Mammary epithelial cell (primary cell): ENCODE measurements at regions of chr18 and their contacts with region 1.

Region 1: DNA sequence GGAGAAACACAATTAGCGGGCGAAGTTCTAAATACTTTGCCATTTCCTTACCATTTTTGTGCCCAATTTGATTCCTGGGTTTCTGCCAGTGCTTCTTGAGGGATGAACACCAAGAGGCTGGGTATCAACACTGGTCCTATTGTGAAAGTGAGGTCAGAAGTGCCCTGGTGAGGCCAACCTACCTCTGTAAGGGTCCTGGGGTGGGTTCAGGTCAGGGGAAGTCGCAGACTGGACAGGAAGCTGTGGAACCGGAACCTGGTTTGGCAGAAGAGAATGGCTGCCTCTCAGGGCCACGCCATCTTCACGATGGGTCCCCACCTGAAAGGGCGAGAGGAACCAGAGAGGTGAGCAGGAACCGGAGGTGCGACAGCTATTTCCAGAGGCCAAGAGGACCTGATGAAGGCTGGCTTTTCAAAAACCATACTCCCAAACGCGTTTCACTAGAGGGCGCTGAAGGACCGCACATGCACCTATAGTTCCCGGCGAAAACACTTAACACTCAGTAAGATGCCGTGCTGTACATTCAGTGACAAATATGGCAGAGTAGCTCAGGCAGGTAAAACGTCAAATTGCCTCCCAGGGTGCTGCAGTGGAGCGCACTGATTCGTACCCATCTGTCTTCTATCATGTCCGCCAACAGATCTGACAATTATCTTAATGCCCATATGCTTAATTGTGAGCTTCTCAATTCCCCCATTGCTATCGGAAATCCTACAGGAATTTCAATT is 275.3 kb upstream of the CCDC68 start:
- DNase-seq: peak; percentile 70
- H3K4me3 ChIP-seq: no peak overlapping the region
- H3K27ac ChIP-seq: no peak overlapping the region
- H3K4me1 ChIP-seq: no peaks in the 10 kb centered on the region
- H3K27me3 ChIP-seq: no peaks in the 10 kb centered on the region
- CTCF ChIP-seq: peak; percentile 73 to 91

Region 2: GRCh38 chr18:54906331-54907185 is 328.0 kb before region 1 on chr18:
- CTCF ChIA-PET with region 1: no interaction called
- dilution Hi-C with region 1: no loop called
- in situ Hi-C with region 1: no loop called
- intact Hi-C with region 1: no loop called
- DNase-seq: no peak
- H3K4me3 ChIP-seq: no peak overlapping the region
- H3K27ac ChIP-seq: no peak overlapping the region
- H3K4me1 ChIP-seq: no peaks in the 10 kb centered on the region
- H3K27me3 ChIP-seq: no peaks in the 10 kb centered on the region
- CTCF ChIP-seq: no peak

Region 3: GRCh38 chr18:55199291-55199963 is 35.1 kb before region 1 on chr18:
- CTCF ChIA-PET with region 1: no interaction called
- dilution Hi-C with region 1: no loop called
- in situ Hi-C with region 1: no loop called
- intact Hi-C with region 1: no loop called
- DNase-seq: no peak
- H3K4me3 ChIP-seq: no peak overlapping the region
- H3K27ac ChIP-seq: no peak overlapping the region
- H3K4me1 ChIP-seq: no peaks in the 10 kb centered on the region
- H3K27me3 ChIP-seq: peaks cover 4% of the 10 kb centered on the region
- CTCF ChIP-seq: no peak

Region 4: GRCh38 chr18:55275039-55275901 is 40.7 kb after region 1 on chr18:
- CTCF ChIA-PET with region 1: interaction called, 3 read pairs
- dilution Hi-C with region 1: no loop called
- in situ Hi-C with region 1: no loop called
- intact Hi-C with region 1: loop called (anchors 1 kb)
- DNase-seq: peak; percentile 31
- H3K4me3 ChIP-seq: no peak overlapping the region
- H3K27ac ChIP-seq: no peak overlapping the region
- H3K4me1 ChIP-seq: peaks cover 13% of the 10 kb centered on the region
- H3K27me3 ChIP-seq: no peaks in the 10 kb centered on the region
- CTCF ChIP-seq: peak; percentile 11 to 25

Region 5: DNA sequence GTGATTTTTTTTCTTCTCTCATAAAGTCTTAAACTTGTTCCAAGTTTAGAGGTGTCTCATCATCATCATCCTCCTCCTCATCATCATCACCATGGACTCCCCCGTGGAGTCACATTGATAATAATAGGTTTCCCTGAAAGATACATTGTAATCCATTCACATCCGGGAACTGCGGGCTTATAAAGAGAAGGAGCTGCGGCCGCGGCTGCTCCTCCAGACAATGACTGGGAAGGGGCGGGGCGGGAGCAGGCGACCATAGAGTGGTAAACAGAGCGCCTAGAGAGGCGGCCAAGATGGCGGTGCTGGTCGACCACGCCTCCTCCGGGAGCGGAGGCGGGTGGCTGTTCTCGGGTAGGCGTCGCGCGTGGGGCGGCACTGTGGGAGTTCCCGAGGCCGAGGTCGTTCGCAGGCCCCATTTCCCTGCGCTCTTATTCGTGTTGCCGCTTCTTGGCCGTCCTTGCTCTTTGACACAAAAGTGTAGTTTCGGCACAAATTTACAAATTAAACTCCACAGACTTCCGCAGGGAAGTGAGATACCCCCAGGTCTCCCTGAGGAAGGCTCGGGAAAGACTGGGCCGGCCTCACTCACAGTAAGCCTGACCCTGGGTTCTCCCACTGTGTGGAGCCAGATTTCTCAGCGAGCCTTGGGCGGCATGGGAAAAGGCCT is 355.2 kb after region 1 on chr18:
- CTCF ChIA-PET with region 1: no interaction called
- dilution Hi-C with region 1: no loop called
- in situ Hi-C with region 1: no loop called
- intact Hi-C with region 1: loop called (anchors 10 kb)
- DNase-seq: peak; percentile 91
- H3K4me3 ChIP-seq: peak overlapping the region; percentile 56 to 82 (median 65)
- H3K27ac ChIP-seq: peak overlapping the region; percentile 52
- H3K4me1 ChIP-seq: peaks cover 10% of the 10 kb centered on the region
- H3K27me3 ChIP-seq: no peaks in the 10 kb centered on the region
- CTCF ChIP-seq: no peak

Region 6: DNA sequence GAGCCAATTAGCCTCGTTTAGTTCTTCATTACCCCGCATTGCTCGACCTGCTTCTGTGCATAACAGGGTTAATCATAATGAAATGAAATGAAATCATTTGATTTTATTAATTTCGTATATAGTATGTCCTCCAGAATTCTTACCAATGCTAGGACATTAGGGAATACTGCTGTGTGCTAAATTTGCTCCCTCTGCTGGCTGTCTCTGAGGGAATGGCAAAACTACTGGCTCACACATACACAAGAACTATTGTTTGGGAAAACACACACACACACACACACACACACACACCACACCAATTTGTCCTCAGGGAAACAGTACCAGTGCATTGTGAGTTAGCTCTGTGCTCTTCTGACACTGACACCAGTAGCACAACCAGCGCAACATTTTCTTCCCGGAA is 626.7 kb after region 1 on chr18:
- CTCF ChIA-PET with region 1: interaction called, 8 read pairs
- dilution Hi-C with region 1: no loop called
- in situ Hi-C with region 1: no loop called
- intact Hi-C with region 1: loop called (anchors 1 kb)
- DNase-seq: peak; percentile 49
- H3K4me3 ChIP-seq: no peak overlapping the region
- H3K27ac ChIP-seq: no peak overlapping the region
- H3K4me1 ChIP-seq: peaks cover 12% of the 10 kb centered on the region
- H3K27me3 ChIP-seq: no peaks in the 10 kb centered on the region
- CTCF ChIP-seq: peak; percentile 54 to 73

Region 7: DNA sequence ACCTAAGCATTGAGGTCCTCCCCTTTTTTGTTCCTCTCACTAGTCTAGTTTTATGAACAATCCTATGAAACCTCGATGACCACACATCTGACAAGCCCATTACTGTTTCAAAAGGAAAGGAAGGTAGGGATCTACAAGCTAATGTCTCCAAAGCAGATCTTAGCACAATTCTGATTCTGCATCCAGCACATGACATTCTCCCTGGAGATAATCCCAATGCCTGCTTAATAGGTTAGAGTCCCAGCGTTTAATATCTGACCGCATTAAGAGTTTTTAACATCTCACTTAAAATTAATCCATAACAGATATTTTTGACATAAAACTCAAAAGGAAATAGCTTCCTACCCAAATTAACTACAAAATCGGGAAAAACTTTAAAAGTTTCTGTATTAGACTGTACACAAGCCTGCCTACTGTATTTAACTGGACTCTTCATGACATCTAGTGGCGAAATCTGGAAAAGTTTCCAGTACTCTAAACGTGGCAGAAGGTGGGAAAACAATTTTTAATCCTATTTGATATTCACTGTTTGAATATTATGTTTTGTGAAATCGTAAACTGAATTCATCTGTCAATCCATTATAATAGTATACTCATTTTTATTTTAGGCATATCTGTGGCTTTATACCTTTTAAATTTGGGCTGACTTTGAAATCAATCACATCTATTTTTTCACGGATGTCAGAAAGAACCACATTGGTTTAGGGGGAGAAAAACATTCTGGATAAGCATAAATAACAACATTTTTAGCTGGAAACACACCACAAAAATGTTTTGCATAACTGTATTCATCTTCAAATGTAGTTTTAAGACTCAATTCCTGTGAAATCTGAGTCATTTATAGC is 1341.5 kb after region 1 on chr18:
- CTCF ChIA-PET with region 1: no interaction called
- dilution Hi-C with region 1: no loop called
- in situ Hi-C with region 1: loop called in 1 of 2 experiments (anchors 25 kb)
- intact Hi-C with region 1: loop called (anchors 1 kb)
- DNase-seq: peak; percentile 20
- H3K4me3 ChIP-seq: no peak overlapping the region
- H3K27ac ChIP-seq: no peak overlapping the region
- H3K4me1 ChIP-seq: no peaks in the 10 kb centered on the region
- H3K27me3 ChIP-seq: no peaks in the 10 kb centered on the region
- CTCF ChIP-seq: peak; percentile 53 to 67